HepG2 (cell line): ENCODE measurements at regions of chr13 and their contacts with region 1.

Region 1: DNA sequence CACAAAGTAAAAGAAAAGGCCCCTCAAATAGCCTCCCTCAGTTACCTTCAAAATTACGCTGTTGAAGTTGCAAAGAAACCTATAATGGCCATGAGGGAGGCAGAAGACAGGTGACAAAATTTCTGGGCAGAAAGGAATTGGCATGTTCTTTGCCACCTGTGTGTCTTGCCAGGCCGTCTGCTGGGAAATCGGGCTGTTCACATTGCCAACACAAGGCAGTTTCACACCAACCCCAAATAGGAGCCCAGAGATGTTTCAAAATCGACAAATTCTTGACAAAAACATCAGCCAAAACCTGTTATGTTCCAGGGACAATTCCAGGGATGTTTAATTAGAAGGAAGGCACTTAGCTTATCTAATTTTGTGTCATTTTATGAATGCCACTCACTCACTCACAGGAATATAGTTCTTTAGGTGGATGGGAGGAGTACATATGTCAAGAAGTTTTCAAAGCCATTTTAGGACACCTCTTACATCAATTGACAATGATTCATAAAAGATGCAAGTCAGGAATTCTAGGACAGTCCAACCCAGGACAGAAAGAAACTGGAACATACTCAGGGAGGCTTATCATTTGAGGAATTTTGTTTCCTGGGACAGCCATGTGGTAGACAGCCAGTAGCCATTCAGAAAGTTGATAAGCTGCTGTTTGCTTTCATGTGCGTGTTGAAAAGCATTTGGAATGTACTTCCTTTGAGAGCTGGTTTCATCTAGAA is 164.5 kb downstream of the RGCC start:
- DNase-seq: peak; percentile 35
- ATAC-seq: no peak
- H3K4me3 ChIP-seq: no peak overlapping the region
- H3K27ac ChIP-seq: no peak overlapping the region
- H3K4me1 ChIP-seq: peaks cover 18% of the 10 kb centered on the region
- H3K27me3 ChIP-seq: no peaks in the 10 kb centered on the region
- CTCF ChIP-seq: no peak
- EP300 ChIP-seq: no peak
- POLR2A ChIP-seq: no peak
- RAD21 ChIP-seq: no peak

Region 2: DNA sequence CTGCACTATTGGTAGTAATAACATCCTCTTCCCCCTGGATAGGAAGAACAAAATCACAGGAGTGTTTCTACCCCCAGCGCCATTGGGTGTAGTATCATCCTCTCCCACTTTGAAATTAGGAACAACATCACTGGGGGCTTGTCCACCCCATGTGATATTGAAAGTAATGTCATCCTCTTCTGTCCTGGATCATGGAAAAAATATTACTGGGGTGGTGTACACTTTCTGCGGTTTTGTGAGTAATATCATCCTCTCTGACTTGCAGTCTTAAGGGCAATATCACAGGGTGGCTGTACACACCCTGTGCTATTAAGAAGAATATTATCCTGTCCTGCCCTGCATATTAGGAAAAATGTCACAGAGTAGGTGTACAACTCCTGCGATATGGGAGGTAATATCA is 169.4 kb before region 1 on chr13:
- CTCF ChIA-PET with region 1: no interaction called
- POLR2A ChIA-PET with region 1: no interaction called
- in situ Hi-C with region 1: no loop called
- intact Hi-C with region 1: no loop called
- DNase-seq: no peak
- ATAC-seq: no peak
- H3K4me3 ChIP-seq: no peak overlapping the region
- H3K27ac ChIP-seq: no peak overlapping the region
- H3K4me1 ChIP-seq: peaks cover 18% of the 10 kb centered on the region
- H3K27me3 ChIP-seq: peaks cover 0 to 21% of the 10 kb centered on the region in 2 experiments; a peak in 2 of 5 replicates
- CTCF ChIP-seq: no peak
- EP300 ChIP-seq: no peak
- POLR2A ChIP-seq: no peak
- RAD21 ChIP-seq: no peak

Region 3: GRCh38 chr13:41634407-41634806 is 12.5 kb after region 1 on chr13:
- CTCF ChIA-PET with region 1: no interaction called
- POLR2A ChIA-PET with region 1: no interaction called
- in situ Hi-C with region 1: no loop called
- intact Hi-C with region 1: loop called (anchors 2 kb)
- DNase-seq: no peak
- ATAC-seq: no peak
- H3K4me3 ChIP-seq: no peak overlapping the region
- H3K27ac ChIP-seq: no peak overlapping the region
- H3K4me1 ChIP-seq: peaks cover 17% of the 10 kb centered on the region
- H3K27me3 ChIP-seq: no peaks in the 10 kb centered on the region
- CTCF ChIP-seq: no peak
- EP300 ChIP-seq: no peak
- POLR2A ChIP-seq: no peak
- RAD21 ChIP-seq: no peak

Region 4: DNA sequence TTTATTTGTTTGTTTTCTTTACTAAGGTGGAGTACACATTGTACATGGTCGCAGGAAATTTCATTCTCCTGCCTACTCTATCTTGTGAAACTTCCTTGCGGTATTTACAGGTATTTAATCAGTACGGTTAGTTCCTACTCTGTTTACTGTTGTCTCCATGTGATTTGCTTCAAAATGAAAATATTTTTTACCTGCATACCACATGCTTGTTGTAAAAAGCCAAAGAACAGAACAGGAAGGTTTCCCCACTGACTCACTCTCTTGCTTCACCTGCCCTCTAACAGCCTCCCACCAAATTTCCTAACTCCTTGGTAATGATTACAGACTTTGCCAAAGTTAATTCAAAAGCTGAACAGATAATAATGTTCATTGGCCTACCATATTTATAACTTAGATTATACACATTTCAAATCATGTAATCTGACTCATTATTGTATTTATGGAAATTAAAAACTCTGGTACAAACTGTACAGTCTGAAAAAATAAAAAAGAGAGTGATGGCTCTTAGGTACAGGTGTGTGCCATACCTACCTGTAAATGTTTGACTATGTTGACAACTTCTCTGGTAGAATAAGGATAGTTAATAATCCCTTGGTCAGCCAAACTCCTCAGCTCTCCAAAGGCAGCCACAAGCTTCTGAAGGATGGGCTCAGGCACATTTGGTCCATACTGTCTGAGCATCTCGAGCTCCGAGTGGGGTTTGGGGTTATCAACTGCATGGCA is 99.1 kb after region 1 on chr13:
- CTCF ChIA-PET with region 1: no interaction called
- POLR2A ChIA-PET with region 1: no interaction called
- in situ Hi-C with region 1: no loop called
- intact Hi-C with region 1: no loop called
- DNase-seq: no peak
- ATAC-seq: no peak
- H3K4me3 ChIP-seq: no peak overlapping the region
- H3K27ac ChIP-seq: no peak overlapping the region
- H3K4me1 ChIP-seq: no peaks in the 10 kb centered on the region
- H3K27me3 ChIP-seq: no peaks in the 10 kb centered on the region
- CTCF ChIP-seq: no peak
- EP300 ChIP-seq: no peak
- POLR2A ChIP-seq: no peak
- RAD21 ChIP-seq: no peak